ENCODE measurements at regions of chr3 and their contacts with region 1.

Region 1: GRCh38 chr3:190120269-190121060 is at the start of gene P3H2:
- DNase-seq: peak; percentile 78 to 90 (median 85)
- ATAC-seq: peak; percentile 91 to 100 (median 99)
- H3K4me3 ChIP-seq: peak within 1 kb of the TSS; percentile 50 to 90 (median 80)
- H3K27ac ChIP-seq: peak within 1 kb of the TSS in 10 of 12 donors; percentile 16 to 91 (median 72)
- H3K4me1 ChIP-seq: peaks cover 0 to 20% (median 6%) of the 10 kb centered on the region in 12 donors
- H3K27me3 ChIP-seq: peaks cover 0 to 30% (median 0%) of the 10 kb centered on the region in 9 donors
- CTCF ChIP-seq: peak; percentile 4 to 78 (median 42)
- POLR2A ChIP-seq: no peak
- total RNA-seq, gene P3H2: 1.5 to 24.8 (median 4.3) TPM

Region 2: DNA sequence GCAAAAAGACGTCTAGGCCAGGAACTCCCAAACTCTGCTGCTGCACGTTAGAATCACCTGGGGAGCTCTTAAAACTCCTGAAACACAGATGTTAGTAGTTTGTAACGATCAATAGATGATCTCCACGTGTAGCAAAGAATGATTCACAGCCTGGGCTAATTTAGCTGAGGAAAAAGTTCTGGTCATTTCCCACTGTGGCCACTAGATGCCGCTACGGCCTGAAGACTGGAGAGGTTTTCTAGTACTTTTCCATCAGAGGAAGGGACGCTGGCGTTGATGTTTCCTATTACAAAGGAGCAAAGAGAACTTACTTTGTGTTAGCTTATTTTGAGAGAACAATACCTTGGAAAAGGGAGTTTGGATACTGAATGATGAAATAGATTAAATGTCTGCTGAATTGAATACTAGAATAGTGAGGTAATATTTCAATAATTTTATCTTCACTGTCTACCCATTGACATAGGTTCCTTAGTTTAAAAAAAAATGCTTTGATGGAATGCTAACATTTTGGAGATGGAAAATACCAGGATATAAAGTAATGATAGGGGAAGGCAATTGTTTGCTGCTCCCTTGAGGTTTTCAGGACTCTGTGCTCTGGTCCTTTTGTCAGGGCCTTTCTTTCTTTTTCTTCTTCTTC is 158.8 kb before region 1 on chr3:
- intact Hi-C with region 1: loop called in 6 of 10 experiments (anchors 2 to 10 kb)
- DNase-seq: peak; percentile 66 to 73 (median 71)
- ATAC-seq: peak; percentile 42 to 78 (median 73)
- H3K4me3 ChIP-seq: no peak overlapping the region
- H3K27ac ChIP-seq: peak overlapping the region in 5 of 12 donors; percentile 8 to 33 (median 8)
- H3K4me1 ChIP-seq: peaks cover 0 to 6% (median 0%) of the 10 kb centered on the region in 12 donors
- H3K27me3 ChIP-seq: no peaks in the 10 kb centered on the region
- CTCF ChIP-seq: peak; percentile 83 to 96 (median 91)
- POLR2A ChIP-seq: no peak

Region 3: DNA sequence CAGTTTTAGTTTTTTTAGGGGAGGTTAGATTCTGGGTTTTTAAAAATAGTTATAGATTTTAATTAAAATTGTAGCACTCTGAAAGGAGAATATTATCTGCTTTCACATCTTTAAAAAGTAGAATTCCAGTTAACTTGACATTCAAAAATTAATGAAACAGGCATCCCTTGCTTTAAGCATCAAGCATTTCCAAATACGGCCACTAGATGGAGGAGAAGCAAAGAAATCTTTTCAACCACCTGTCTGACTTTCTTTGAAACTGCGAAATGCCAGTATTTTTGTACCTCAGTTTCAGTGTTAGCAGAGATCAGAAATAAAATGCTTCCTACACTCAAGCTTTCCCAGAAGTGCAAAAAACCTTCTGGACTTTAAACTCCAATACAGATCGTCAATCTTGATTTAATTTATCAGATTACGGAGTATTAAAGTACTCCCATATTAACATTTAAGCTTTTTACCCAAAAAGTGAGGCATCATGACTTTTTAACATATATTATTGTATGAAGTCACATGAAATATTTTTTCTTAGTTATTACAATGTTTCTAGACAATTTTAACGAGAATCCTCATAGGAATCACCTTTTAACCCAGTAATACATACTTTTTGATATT is 153.1 kb before region 1 on chr3:
- intact Hi-C with region 1: loop called in 8 of 10 experiments (anchors 2 to 10 kb)
- DNase-seq: no peak
- ATAC-seq: no peak
- H3K4me3 ChIP-seq: no peak overlapping the region
- H3K27ac ChIP-seq: no peak overlapping the region
- H3K4me1 ChIP-seq: peaks cover 0 to under 1% (median 0%) of the 10 kb centered on the region in 12 donors
- H3K27me3 ChIP-seq: no peaks in the 10 kb centered on the region
- CTCF ChIP-seq: peak; percentile 81 to 89 (median 84)
- POLR2A ChIP-seq: no peak

Region 4: DNA sequence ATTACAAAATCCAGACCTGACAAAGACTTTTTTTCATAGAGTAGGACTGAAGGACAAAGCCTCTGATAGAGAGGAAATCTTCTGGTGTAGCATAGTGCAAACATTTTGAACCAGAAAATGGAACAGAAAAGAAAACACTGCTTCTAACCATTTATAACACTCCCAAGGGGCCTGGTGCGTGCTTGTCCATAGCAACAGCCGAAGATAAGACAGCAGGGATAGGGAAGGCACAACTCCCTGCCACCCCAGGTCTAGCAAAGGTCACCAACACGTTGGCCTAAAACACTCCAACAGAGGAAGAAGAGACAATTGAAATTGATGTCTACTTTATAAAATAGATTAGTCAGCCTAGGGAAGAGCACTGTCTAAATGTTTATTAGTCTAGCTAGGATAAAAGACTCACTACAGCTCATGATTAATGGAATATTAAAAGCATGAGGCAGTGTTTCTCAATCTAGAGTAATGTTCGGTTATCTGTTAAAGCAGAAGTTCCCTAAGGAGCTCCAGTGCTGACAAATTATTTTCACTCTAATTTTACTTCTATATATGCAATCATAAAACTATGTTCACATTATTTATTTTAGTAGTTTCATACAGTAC is 145.0 kb before region 1 on chr3:
- intact Hi-C with region 1: loop called in 2 of 10 experiments (anchors 10 kb)
- DNase-seq: peak in 1 of 5 donors; percentile 39
- ATAC-seq: peak in 1 of 4 donors; percentile 28
- H3K4me3 ChIP-seq: no peak overlapping the region
- H3K27ac ChIP-seq: peak overlapping the region in 2 of 12 donors; percentile 2 to 40
- H3K4me1 ChIP-seq: peaks cover 0 to 9% (median 0%) of the 10 kb centered on the region in 12 donors
- H3K27me3 ChIP-seq: no peaks in the 10 kb centered on the region
- CTCF ChIP-seq: no peak
- POLR2A ChIP-seq: no peak

Region 5: DNA sequence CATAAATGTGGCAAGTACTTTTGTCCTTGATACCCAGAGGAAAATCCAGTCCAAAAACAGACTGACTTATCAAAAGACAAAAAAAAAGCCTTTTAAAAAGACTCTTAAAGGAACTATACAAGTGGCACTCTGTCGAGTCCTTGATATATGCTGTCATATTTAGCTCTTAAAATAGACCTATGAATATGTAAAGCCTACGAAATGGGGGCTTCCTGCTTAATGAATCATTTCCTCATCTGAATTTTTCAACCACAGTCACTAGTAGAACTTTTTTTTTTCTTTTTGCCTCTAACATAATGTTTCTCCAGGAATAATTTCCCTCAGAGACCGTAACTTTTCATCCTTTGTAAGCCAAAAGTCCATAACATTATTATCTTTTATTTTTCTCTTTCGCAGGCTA is 95.6 kb before region 1 on chr3:
- intact Hi-C with region 1: loop called in 1 of 10 experiments (anchors 5 kb)
- DNase-seq: no peak
- ATAC-seq: no peak
- H3K4me3 ChIP-seq: no peak overlapping the region
- H3K27ac ChIP-seq: no peak overlapping the region
- H3K4me1 ChIP-seq: peaks cover 0 to 7% (median 0%) of the 10 kb centered on the region in 12 donors
- H3K27me3 ChIP-seq: no peaks in the 10 kb centered on the region
- CTCF ChIP-seq: no peak
- POLR2A ChIP-seq: no peak

Region 6: GRCh38 chr3:190053919-190054672 is 66.4 kb before region 1 on chr3:
- intact Hi-C with region 1: loop called in 1 of 10 experiments (anchors 10 kb)
- DNase-seq: peak in 1 of 5 donors; percentile 37
- ATAC-seq: peak in 2 of 4 donors; percentile 33 to 74
- H3K4me3 ChIP-seq: no peak overlapping the region
- H3K27ac ChIP-seq: peak overlapping the region in 1 of 12 donors; percentile 3
- H3K4me1 ChIP-seq: peaks cover 0 to 16% (median 2%) of the 10 kb centered on the region in 12 donors
- H3K27me3 ChIP-seq: no peaks in the 10 kb centered on the region
- CTCF ChIP-seq: peak in 1 of 12 donors; percentile 19
- POLR2A ChIP-seq: no peak

Region 7: GRCh38 chr3:190205739-190206138 is 85.3 kb after region 1 on chr3:
- intact Hi-C with region 1: loop called in 1 of 10 experiments (anchors 5 kb)
- DNase-seq: no peak
- ATAC-seq: no peak
- H3K4me3 ChIP-seq: no peak overlapping the region
- H3K27ac ChIP-seq: no peak overlapping the region
- H3K4me1 ChIP-seq: peaks cover 0 to 2% (median 0%) of the 10 kb centered on the region in 12 donors
- H3K27me3 ChIP-seq: no peaks in the 10 kb centered on the region
- CTCF ChIP-seq: no peak
- POLR2A ChIP-seq: no peak

Measured in heart left ventricle (tissue), 16 donors.